Lower leg skin (tissue), 4 donors: ENCODE measurements at regions of chr14 and their contacts with region 1.

Region 1: DNA sequence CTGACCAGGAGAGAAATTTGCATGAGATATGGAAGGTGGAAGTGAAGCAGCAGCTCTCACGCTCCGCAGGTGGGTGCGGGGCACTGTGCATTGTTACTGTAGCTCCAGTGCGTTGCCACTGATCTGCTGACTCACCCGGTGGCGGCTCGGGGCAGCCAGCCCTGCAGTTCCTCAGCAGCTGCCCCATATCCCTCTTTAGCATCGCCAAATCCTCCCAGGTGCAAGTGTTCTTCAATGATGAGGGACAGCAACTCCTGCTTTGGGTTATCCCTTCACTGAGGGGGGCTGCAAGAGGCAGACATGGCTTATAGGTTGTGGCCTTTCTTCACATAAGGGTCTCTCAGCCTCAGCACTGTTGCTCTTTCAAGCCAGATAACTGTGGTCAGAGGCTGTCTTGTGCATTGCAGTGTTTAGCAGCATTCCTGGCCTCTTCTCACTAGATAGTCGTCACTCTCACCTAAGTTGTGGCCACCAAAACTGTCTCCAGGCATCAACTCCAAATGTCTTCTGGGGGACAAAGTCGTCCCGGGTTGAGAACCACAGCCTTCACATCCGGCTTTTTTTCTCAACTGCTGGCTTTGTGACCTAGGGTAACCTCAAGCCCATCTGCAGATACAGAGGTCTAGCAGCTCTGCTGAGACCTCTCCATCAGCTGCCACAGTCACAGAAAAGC is 180.8 kb downstream of the EFCAB11 start:
- DNase-seq: no peak
- H3K4me3 ChIP-seq: no peak overlapping the region
- CTCF ChIP-seq: no peak
- POLR2A ChIP-seq: no peak

Region 2: DNA sequence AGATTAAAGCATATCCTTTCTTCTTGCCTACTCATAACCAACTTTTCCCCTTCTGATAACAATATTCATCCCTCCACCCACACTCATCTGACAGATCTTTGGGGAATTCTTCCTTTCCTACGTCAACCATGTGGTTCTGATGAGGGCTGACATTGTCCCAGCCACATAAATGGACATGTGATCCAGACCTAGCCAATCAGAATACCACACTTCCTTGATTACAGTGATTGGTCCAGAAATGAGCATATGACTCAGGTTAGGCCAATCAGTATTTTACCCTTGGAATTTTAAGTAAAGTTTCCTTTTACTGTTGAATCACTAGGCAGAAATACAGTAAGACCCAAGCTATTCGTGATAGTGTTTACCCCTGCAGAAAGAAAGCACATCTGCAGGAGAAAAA is 1709.9 kb before region 1 on chr14:
- intact Hi-C with region 1: no loop called
- DNase-seq: no peak
- H3K4me3 ChIP-seq: no peak overlapping the region
- CTCF ChIP-seq: no peak
- POLR2A ChIP-seq: no peak

Region 3: GRCh38 chr14:89899917-89900663 is 126.3 kb after region 1 on chr14:
- intact Hi-C with region 1: loop called (anchors 5 kb)
- DNase-seq: no peak
- H3K4me3 ChIP-seq: no peak overlapping the region
- CTCF ChIP-seq: no peak
- POLR2A ChIP-seq: no peak

Region 4: GRCh38 chr14:90703841-90704737 is 930.3 kb after region 1 on chr14:
- intact Hi-C with region 1: no loop called
- DNase-seq: no peak
- H3K4me3 ChIP-seq: no peak overlapping the region
- CTCF ChIP-seq: no peak
- POLR2A ChIP-seq: no peak